AG04450 (cell line): ENCODE measurements at regions of chr16 and their contacts with region 1.

Region 1: DNA sequence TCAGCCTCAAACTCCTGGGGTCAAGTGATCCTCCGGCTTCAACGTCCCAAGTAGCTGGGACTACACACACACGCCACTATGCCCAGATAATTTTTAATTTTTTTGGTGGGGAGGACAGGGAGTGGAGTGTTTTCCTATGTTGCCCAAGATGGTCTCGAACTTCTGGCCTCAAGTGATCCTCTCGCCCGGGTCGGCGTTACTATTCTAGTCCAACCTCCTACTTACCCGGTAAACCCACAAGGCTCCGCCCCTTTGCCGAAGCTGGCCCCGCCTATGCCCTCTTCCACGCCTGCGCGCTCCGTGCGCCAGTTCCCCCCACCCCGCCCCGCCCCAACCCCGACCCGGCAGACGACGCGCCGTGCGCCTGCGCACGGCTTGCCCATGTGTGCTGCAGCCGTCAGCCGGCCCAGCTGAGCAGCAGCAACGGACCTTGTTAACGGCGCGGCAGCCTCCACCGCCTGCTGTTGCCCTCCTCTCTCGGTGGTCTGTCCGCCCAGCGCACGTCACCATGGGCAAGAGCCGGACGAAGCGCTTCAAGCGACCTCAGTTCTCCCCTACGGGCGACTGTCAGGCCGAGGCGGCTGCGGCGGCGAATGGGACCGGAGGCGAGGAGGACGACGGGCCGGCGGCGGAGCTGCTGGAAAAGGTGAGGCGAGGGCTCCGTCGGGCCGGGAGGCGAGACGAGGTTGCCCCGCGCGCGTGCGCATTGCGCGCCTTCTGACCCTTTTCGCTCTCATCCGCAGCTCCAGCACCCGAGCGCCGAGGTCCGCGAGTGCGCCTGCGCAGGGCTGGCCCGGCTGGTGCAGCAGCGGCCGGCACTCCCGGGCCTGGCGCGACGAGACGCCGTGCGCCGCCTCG is at the start of gene HEATR3:
- DNase-seq: peak; percentile 85
- H3K4me3 ChIP-seq: peak within 1 kb of the TSS; percentile 99
- H3K27ac ChIP-seq: peak within 1 kb of the TSS; percentile 84
- H3K27me3 ChIP-seq: no peaks in the 10 kb centered on the region
- CTCF ChIP-seq: no peak
- polyA plus RNA-seq, gene HEATR3: 15.0 and 17.1 TPM in 2 replicates

Region 2: DNA sequence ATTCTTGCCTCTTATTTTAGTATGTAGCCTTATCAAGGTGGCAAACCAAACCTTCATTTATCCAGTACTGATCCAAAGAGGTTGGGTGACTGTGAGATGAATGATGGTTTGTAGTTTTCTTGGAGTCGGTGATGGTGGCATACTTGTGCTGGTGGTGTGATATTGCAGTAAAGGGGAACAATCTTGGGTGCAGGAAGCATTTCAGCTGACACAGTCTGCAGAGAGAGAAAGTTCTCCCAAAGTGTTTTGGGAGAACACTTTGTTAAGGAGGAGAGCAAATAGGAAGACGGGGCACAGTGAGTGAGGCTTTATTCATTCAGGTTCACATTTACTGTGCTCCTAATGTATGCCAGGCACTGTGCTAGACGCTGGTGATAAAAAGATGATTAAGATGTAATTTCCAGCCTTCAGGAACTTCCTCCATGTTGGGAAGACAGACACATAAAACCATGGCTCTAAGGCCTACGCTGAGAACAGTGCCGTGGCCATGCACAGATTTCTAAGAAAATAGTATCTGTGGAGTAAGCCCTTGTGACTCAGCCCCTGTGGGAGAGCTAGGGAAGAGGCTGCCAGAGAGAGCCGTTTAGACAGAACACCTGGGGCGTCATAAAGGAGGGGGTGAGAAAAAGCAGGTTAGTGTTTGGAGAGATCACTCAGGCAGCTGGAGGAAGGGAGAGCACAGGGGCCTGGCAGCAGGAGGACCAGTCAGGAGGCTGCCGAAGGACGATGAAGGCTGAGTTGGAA is 13.7 kb after region 1 on chr16:
- CTCF ChIA-PET with region 1: interaction called, 15 read pairs
- POLR2A ChIA-PET with region 1: no interaction called
- DNase-seq: no peak
- H3K4me3 ChIP-seq: no peak overlapping the region
- H3K27ac ChIP-seq: no peak overlapping the region
- H3K27me3 ChIP-seq: no peaks in the 10 kb centered on the region
- CTCF ChIP-seq: no peak